Transverse colon (tissue), 4 donors: ENCODE measurements at regions of chr6 and their contacts with region 1.

Region 1: DNA sequence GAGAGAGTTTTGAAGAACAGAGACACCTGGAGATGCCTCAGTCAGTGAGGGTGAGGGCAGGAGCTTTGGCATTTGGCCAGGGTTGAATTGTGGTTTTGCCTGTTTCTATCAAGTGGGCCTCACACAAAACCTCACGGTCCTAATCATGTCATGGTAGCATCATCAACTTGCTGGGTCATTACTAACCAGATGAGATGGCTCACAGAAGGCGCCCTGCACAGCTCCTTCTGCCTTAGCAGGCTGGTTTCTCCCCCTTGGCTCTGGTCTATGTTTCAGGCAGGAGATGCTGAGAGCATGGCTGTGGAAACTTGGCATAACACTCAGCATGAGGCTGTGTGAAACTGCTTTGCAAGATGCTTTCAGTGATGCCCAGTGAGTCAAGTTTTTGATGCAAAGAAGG is 99.3 kb downstream of the LRRC1 start:
- DNase-seq: peak; percentile 18
- H3K4me3 ChIP-seq: no peak overlapping the region
- H3K27ac ChIP-seq: peak overlapping the region in 1 of 4 donors; percentile 9
- H3K4me1 ChIP-seq: no peaks in the 10 kb centered on the region
- H3K27me3 ChIP-seq: no peaks in the 10 kb centered on the region
- CTCF ChIP-seq: no peak
- EP300 ChIP-seq: no peak
- POLR2A ChIP-seq: no peak

Region 2: GRCh38 chr6:53794720-53795253 is 99.3 kb before region 1 on chr6 and contains the start of gene LRRC1:
- in situ Hi-C with region 1: no loop called
- intact Hi-C with region 1: loop called (anchors 1 kb)
- DNase-seq: peak; percentile 95
- H3K4me3 ChIP-seq: peak within 1 kb of the TSS; percentile 74 to 94 (median 90)
- H3K27ac ChIP-seq: peak within 1 kb of the TSS; percentile 85 to 89 (median 87)
- H3K4me1 ChIP-seq: peaks cover 0 to 46% (median 24%) of the 10 kb centered on the region in 4 donors
- H3K27me3 ChIP-seq: no peaks in the 10 kb centered on the region
- CTCF ChIP-seq: no peak
- EP300 ChIP-seq: no peak
- POLR2A ChIP-seq: peak; percentile 66
- total RNA-seq, gene LRRC1: 71.0 to 151 (median 91.6) TPM

Region 3: DNA sequence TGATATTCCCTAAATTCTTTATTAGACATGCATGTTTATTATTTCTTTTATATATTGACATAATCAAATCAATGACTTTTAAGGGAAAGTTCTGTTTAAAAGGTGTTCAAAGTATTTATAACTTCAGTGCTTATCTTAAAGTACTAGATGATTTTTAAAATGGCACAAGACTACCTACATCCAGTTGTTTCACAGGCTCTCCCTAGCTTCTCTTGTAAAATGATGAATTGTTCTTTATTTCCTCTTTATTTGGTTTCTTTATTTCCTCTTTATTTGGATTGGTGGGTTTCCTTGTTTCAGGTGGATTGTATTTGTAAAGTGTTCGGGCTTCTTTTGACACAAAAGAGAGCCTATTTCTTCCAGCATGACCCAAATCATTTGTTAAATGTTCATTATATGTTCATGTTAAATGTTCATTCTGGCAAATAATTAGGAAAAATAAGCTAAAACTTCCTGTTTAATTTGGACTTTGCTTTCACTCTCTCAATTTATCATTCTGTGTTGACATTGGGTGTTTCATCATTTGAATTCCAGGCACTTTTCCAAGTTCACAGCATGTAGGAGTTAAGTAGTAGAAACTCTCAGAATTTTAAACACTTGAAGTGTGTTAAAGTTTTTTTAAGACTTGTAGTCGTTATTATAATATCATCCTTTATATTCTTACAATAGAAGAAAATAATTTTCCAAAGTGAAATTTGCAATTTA is 241.7 kb after region 1 on chr6:
- in situ Hi-C with region 1: no loop called
- intact Hi-C with region 1: no loop called
- DNase-seq: no peak
- H3K4me3 ChIP-seq: no peak overlapping the region
- H3K27ac ChIP-seq: peak overlapping the region in 2 of 4 donors; percentile 46
- H3K4me1 ChIP-seq: peaks cover 0 to 13% (median 6%) of the 10 kb centered on the region in 4 donors
- H3K27me3 ChIP-seq: no peaks in the 10 kb centered on the region
- CTCF ChIP-seq: no peak
- EP300 ChIP-seq: no peak
- POLR2A ChIP-seq: no peak